ENCODE measurements at regions of chr20 and their contacts with region 1.

Region 1: DNA sequence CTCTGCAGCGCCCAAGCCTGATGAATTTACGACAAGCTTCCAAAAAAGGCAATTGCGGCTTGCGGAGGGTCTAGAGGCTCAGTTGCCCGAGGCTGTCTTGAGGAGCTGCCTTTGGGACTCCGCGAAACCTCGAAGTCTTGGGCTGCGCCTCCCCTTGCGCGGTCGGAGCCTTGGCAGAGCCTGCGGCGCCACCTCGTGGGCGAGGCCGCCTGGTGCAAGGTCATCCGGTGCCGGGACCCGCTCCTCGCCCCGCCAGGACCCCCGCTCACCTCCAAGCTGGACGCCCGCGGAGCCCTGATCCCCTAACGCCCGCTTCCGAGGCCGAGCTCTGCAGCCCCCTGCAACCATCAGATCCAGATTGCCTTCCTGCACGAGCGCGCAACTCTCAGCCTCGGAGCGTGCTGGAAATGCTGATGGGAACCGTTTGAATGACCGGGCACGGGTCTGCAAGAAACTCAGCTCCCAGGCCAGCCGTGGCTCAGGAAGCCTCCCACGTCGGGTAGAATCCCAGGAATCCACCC is 14.9 kb upstream of the FAM210B start:
- DNase-seq: peak; percentile 77
- CTCF ChIP-seq: peak; percentile 63

Region 2: GRCh38 chr20:56247948-56248782 is 95.8 kb before region 1 on chr20 and contains the start of gene MC3R:
- CTCF ChIA-PET with region 1: interaction called, 10 read pairs
- POLR2A ChIA-PET with region 1: no interaction called
- DNase-seq: peak; percentile 43
- CTCF ChIP-seq: peak; percentile 81

Region 3: GRCh38 chr20:56497326-56497725 is 153.4 kb after region 1 on chr20:
- CTCF ChIA-PET with region 1: no interaction called
- POLR2A ChIA-PET with region 1: no interaction called
- DNase-seq: no peak
- CTCF ChIP-seq: no peak